CD4-positive, alpha-beta memory T cell (primary cell): ENCODE measurements at regions of chr10 and their contacts with region 1.

Region 1: DNA sequence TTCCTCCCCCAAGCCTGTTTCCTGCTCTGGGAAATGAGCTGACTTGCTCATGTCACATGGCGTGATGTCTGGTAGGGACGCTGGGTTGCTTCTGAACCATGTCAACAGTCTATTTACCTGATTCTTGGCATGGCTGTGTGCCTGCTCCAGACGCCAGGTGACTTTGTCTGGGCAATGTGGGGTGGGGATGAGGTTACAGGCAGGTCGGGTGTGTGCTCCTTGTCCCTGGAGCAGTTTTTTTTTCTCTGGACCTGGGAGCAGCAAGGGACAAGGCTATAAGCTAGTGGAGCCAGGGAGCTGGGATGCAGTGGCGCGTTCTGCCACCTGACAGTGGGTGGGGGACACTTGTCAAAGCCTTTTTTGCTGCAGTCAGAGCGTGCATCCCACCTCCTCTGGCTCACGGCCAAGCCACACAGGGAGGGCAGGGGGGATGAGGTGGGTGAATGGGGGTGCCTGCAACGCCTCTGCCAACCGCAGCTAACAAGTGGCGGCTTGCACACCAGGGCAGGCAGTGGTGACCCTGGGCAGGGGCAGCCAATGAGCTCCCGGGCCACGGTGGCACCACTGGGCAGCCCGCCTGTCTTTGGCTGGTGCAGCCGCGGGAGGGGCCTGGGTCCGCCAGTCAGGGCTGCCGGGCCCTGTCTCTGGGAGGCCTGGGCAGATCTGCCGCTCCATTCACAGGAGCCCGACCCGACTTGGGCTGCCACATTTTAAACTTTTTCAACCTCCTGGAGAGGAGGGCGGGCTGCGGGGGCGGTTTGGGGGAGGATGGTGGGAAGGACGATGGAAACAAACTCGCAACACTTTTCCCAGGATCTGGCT is 22.9 kb downstream of the DNAJB12 start:
- DNase-seq: peak; percentile 92 to 97 (median 94)
- H3K4me3 ChIP-seq: peak overlapping the region; percentile 12 to 47
- H3K4me3 Mint-ChIP-seq: peak overlapping the region; percentile 69 to 86 (median 82)
- H3K27ac ChIP-seq: peak overlapping the region; percentile 65
- H3K27ac Mint-ChIP-seq: peak overlapping the region; percentile 95 to 98 (median 97)
- H3K4me1 ChIP-seq: peaks cover 100% of the 10 kb centered on the region
- H3K4me1 Mint-ChIP-seq: peaks cover 51 to 97% (median 81%) of the 10 kb centered on the region in 4 donors
- H3K27me3 ChIP-seq: no peaks in the 10 kb centered on the region
- H3K27me3 Mint-ChIP-seq: no peaks in the 10 kb centered on the region

Region 2: DNA sequence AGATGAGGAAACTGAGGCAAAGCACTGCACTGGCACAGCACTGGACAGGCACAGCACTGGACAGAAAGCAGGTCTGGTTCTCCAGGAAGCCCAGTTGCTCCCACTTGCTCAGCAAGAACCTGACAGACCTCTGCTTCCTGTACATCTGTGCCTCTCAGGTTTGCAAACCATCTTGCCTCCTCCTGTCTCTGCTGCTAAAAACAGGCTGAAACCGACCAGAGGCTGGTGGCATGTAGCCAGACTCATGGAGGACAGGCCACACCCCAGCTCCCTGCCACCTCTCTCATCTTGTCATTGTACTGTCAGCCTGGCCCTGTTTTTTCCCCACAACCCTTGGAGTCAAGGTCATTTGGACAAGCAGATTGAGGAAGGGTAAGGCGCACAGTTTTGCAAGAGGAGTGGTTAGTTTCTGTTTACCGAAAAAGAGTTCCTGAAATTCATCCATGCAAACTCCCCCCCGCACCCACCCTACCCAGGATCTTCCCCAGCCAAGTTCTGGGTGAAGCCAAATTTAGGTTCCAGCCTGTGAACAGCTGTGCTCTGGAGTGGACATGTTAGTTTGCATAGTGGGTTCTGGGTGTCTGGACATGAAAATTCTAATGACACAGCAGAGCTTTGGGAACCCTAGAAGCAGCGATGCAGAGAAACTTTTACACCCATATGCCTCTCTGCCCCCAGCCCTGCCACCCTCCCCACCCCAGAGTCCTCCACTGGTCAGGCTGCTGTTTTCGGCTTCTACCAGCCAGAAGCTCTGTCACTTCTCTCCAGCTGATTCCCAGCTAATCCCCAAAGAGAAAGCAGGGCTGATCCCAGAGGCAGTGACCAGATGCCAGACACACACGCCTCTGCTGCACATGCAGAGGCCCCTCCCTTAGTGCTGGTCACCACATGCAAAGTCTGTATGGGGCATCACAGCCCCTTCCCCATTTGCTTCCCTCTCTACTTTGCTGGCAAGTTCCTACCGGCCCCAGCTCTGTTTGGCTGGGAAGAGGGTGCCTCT is 603.8 kb before region 1 on chr10:
- CTCF ChIA-PET with region 1: no interaction called
- POLR2A ChIA-PET with region 1: no interaction called
- intact Hi-C with region 1: no loop called
- DNase-seq: peak; percentile 84 to 91 (median 88)
- H3K4me3 ChIP-seq: peak overlapping the region in 1 of 2 donors; percentile 49
- H3K4me3 Mint-ChIP-seq: peak overlapping the region; percentile 75 to 87 (median 80)
- H3K27ac ChIP-seq: peak overlapping the region; percentile 73
- H3K27ac Mint-ChIP-seq: peak overlapping the region; percentile 96 to 99 (median 98)
- H3K4me1 ChIP-seq: peaks cover 97% of the 10 kb centered on the region
- H3K4me1 Mint-ChIP-seq: peaks cover 54 to 95% (median 76%) of the 10 kb centered on the region in 4 donors
- H3K27me3 ChIP-seq: no peaks in the 10 kb centered on the region
- H3K27me3 Mint-ChIP-seq: no peaks in the 10 kb centered on the region

Region 3: GRCh38 chr10:72126184-72126871 is 205.5 kb before region 1 on chr10:
- CTCF ChIA-PET with region 1: interaction called, 196 read pairs
- POLR2A ChIA-PET with region 1: interaction called, 13 read pairs
- intact Hi-C with region 1: loop called (anchors 1 kb)
- DNase-seq: peak in 3 of 5 donors; percentile 16 to 28 (median 25)
- H3K4me3 ChIP-seq: no peak overlapping the region
- H3K4me3 Mint-ChIP-seq: no peak overlapping the region
- H3K27ac ChIP-seq: no peak overlapping the region
- H3K27ac Mint-ChIP-seq: peak overlapping the region in 5 of 7 donors; percentile 25 to 87 (median 38)
- H3K4me1 ChIP-seq: peaks cover 29% of the 10 kb centered on the region
- H3K4me1 Mint-ChIP-seq: peaks cover 24 to 34% (median 26%) of the 10 kb centered on the region in 4 donors
- H3K27me3 ChIP-seq: no peaks in the 10 kb centered on the region
- H3K27me3 Mint-ChIP-seq: no peaks in the 10 kb centered on the region

Region 4: GRCh38 chr10:72229261-72230251 is 102.3 kb before region 1 on chr10:
- CTCF ChIA-PET with region 1: interaction called, 89 read pairs
- POLR2A ChIA-PET with region 1: interaction called, 3 read pairs
- intact Hi-C with region 1: no loop called
- DNase-seq: no peak
- H3K4me3 ChIP-seq: no peak overlapping the region
- H3K4me3 Mint-ChIP-seq: peak overlapping the region in 2 of 8 donors; percentile 20 to 42
- H3K27ac ChIP-seq: no peak overlapping the region
- H3K27ac Mint-ChIP-seq: peak overlapping the region; percentile 3 to 89 (median 68)
- H3K4me1 ChIP-seq: peaks cover 35% of the 10 kb centered on the region
- H3K4me1 Mint-ChIP-seq: peaks cover 26 to 43% (median 35%) of the 10 kb centered on the region in 4 donors
- H3K27me3 ChIP-seq: no peaks in the 10 kb centered on the region
- H3K27me3 Mint-ChIP-seq: no peaks in the 10 kb centered on the region

Region 5: GRCh38 chr10:72260588-72261322 is 71.1 kb before region 1 on chr10:
- CTCF ChIA-PET with region 1: interaction called, 11 read pairs
- POLR2A ChIA-PET with region 1: interaction called, 14 read pairs
- intact Hi-C with region 1: no loop called
- DNase-seq: peak; percentile 77 to 92 (median 80)
- H3K4me3 ChIP-seq: peak overlapping the region; percentile 52 to 90
- H3K4me3 Mint-ChIP-seq: peak overlapping the region; percentile 84 to 93 (median 89)
- H3K27ac ChIP-seq: peak overlapping the region; percentile 74
- H3K27ac Mint-ChIP-seq: peak overlapping the region; percentile 95 to 98 (median 96)
- H3K4me1 ChIP-seq: peaks cover 89% of the 10 kb centered on the region
- H3K4me1 Mint-ChIP-seq: peaks cover 49 to 77% (median 63%) of the 10 kb centered on the region in 4 donors
- H3K27me3 ChIP-seq: no peaks in the 10 kb centered on the region
- H3K27me3 Mint-ChIP-seq: no peaks in the 10 kb centered on the region

Region 6: DNA sequence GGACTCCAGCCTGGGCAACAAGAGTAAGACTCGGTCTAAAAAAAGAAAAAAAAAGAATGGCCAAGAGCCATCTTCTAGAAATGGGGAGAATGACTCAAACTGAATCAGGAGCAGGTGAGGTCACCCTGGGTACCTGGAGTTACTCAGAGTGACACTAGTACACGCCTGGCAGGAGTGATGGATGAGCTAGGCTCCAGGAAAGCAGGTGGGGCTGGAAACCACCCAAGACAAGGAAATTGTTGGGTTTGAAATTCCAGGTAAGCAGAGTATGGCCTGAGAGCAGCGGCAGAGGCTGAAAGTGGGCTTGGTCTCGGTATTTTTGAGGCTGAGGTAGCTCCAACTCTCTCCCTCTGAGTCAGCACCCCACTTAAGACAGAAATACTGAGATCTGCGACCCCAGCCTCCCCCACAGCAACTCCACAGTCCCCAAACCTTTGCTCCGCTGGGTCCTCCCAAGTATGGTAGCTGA is 39.6 kb before region 1 on chr10:
- CTCF ChIA-PET with region 1: interaction called, 13 read pairs
- POLR2A ChIA-PET with region 1: interaction called, 53 read pairs
- intact Hi-C with region 1: loop called (anchors 1 kb)
- DNase-seq: peak in 2 of 5 donors; percentile 9 to 57
- H3K4me3 ChIP-seq: no peak overlapping the region
- H3K4me3 Mint-ChIP-seq: peak overlapping the region in 6 of 8 donors; percentile 7 to 70 (median 34)
- H3K27ac ChIP-seq: no peak overlapping the region
- H3K27ac Mint-ChIP-seq: peak overlapping the region; percentile 75 to 99 (median 88)
- H3K4me1 ChIP-seq: peaks cover 66% of the 10 kb centered on the region
- H3K4me1 Mint-ChIP-seq: peaks cover 41 to 67% (median 57%) of the 10 kb centered on the region in 4 donors
- H3K27me3 ChIP-seq: no peaks in the 10 kb centered on the region
- H3K27me3 Mint-ChIP-seq: no peaks in the 10 kb centered on the region